ENCODE measurements at regions of chr12 and their contacts with region 1.

Region 1: DNA sequence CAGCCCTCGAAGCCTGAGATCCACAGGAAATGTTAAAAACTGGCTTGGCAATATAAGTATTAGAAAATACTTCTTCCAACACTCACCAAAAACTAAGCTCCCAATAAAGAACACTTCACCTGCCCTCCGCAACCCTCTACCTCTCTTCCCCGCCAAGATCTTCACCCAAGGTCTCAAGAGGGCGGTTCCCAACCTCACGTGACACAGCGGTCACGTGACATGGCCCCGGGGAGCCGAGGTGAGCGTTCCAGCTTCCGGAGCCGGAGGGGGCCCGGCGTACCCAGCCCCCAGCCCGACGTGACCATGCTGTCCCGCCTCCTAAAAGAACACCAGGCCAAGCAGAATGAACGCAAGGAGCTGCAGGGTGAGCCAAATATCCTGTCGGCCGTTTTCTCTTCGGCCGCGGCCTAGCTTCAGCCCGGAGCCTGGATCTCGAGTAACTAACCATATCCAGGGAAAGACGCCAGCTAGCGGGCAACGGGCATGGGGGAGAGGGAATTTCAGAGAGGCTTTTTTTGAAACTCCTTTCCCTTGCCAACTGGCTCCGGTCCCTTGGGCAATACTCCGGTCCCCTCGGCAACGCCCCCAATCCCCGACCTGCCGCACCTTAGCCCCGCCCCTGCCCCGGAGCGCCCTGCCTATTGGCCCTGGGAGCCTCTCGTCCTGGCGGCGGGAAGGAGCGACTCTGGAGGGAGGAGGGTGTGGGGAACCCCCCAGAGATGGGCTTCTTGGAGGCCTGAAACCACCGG is at the start of gene BLOC1S1:
- DNase-seq: peak; percentile 97
- H3K4me3 ChIP-seq: peak within 1 kb of the TSS; percentile 77
- H3K27ac ChIP-seq: peak within 1 kb of the TSS; percentile 81
- H3K4me1 ChIP-seq: peaks cover 28% of the 10 kb centered on the region
- CTCF ChIP-seq: no peak
- total RNA-seq, gene BLOC1S1: 139 and 161 TPM in 2 replicates

Region 2: GRCh38 chr12:55673638-55674037 is 42.4 kb before region 1 on chr12:
- CTCF ChIA-PET with region 1: interaction called, 4 read pairs
- POLR2A ChIA-PET with region 1: interaction called, 9 read pairs
- intact Hi-C with region 1: loop called (anchors 5 kb)
- DNase-seq: peak; percentile 87
- H3K4me3 ChIP-seq: peak overlapping the region; percentile 41
- H3K27ac ChIP-seq: peak overlapping the region; percentile 85
- H3K4me1 ChIP-seq: peaks cover 28% of the 10 kb centered on the region
- CTCF ChIP-seq: no peak

Region 3: DNA sequence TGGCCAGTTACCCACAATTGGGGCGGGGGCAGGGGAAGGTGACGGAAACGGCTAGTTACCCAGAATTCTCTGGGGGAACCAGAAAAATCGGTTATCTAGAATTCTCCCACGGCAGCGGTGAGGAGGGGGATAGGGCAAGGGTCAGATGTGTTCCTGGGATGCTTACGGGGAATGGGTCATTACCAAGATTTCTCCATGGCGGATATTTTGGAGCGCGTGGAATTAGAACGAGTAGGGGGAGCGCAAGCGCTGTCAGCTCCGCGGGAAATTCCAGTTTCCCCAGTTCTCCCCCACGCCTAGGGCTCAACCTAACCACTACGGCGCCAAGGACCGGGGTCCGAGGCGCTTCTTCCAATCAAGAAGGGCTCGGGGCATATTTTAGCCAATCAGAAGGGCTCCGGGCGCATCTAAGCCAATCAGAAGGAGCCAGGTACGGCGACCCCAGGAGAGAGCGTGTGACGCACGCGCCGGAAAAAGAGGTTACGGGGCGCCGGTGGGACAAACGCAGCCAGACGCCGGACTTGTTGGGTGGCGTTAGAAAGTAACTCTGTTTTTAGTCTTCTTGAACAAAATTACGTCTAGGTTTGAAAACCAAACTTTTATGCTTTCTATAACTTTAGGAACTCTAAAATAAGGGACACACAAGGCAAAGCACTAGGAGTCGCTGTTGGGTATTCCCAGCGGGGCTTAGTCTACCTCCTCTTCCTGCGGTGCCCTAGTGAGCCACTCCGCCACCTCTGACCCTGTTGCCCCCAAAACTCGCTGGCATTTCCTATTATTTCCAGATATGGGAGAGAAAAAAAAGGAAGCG is 617.9 kb after region 1 on chr12 and contains the start of gene PAN2:
- CTCF ChIA-PET with region 1: no interaction called
- POLR2A ChIA-PET with region 1: no interaction called
- intact Hi-C with region 1: no loop called
- DNase-seq: peak; percentile 99
- H3K4me3 ChIP-seq: peak within 1 kb of the TSS; percentile 95
- H3K27ac ChIP-seq: peak within 1 kb of the TSS; percentile 94
- H3K4me1 ChIP-seq: peaks cover 56% of the 10 kb centered on the region
- CTCF ChIP-seq: peak; percentile 78
- total RNA-seq, gene PAN2: 69.9 and 106 TPM in 2 replicates